ENCODE measurements at regions of chr2 and their contacts with region 1.

Region 1: GRCh38 chr2:25951071-25951547 is 31.2 kb downstream of the KIF3C start:
- DNase-seq: peak; percentile 80 to 83
- H3K4me3 ChIP-seq: no peak overlapping the region
- H3K4me3 Mint-ChIP-seq: no peak overlapping the region
- H3K27ac Mint-ChIP-seq: no peak overlapping the region
- H3K4me1 ChIP-seq: no peaks in the 10 kb centered on the region
- H3K4me1 Mint-ChIP-seq: no peaks in the 10 kb centered on the region
- H3K27me3 ChIP-seq: no peaks in the 10 kb centered on the region
- H3K27me3 Mint-ChIP-seq: no peaks in the 10 kb centered on the region
- CTCF ChIP-seq: peak; percentile 91 to 96

Region 2: GRCh38 chr2:24313744-24314632 is 1637.1 kb before region 1 on chr2:
- CTCF ChIA-PET with region 1: no interaction called
- POLR2A ChIA-PET with region 1: no interaction called
- intact Hi-C with region 1: no loop called
- DNase-seq: no peak
- H3K4me3 ChIP-seq: no peak overlapping the region
- H3K4me3 Mint-ChIP-seq: no peak overlapping the region
- H3K27ac Mint-ChIP-seq: no peak overlapping the region
- H3K4me1 ChIP-seq: no peaks in the 10 kb centered on the region
- H3K4me1 Mint-ChIP-seq: no peaks in the 10 kb centered on the region
- H3K27me3 ChIP-seq: no peaks in the 10 kb centered on the region
- H3K27me3 Mint-ChIP-seq: no peaks in the 10 kb centered on the region
- CTCF ChIP-seq: no peak

Region 3: DNA sequence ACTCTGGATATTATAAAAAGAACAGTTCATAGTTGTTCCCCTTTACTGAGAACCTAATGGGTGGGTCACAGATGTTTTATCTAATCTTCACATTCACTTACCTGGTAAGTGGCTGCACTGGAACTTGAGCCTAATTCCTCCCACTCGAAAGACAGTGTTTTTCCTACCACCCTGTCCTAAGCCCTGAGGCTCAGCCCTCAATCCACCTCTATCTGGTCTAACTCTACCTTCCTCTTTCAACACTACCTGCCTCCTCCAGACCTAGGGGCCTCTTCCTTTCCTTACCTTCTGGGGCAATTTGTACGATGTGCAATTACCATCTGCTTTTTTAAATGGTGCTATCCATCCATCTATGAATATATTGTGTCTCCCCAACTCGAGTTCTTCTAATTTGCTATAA is 40.9 kb after region 1 on chr2:
- CTCF ChIA-PET with region 1: interaction called, 4 read pairs
- POLR2A ChIA-PET with region 1: no interaction called
- intact Hi-C with region 1: loop called (anchors 1 kb)
- DNase-seq: no peak
- H3K4me3 ChIP-seq: no peak overlapping the region
- H3K4me3 Mint-ChIP-seq: no peak overlapping the region
- H3K27ac Mint-ChIP-seq: peak overlapping the region; percentile 5
- H3K4me1 ChIP-seq: peaks cover 12% of the 10 kb centered on the region
- H3K4me1 Mint-ChIP-seq: peaks cover 23% of the 10 kb centered on the region
- H3K27me3 ChIP-seq: no peaks in the 10 kb centered on the region
- H3K27me3 Mint-ChIP-seq: no peaks in the 10 kb centered on the region
- CTCF ChIP-seq: no peak

Region 4: DNA sequence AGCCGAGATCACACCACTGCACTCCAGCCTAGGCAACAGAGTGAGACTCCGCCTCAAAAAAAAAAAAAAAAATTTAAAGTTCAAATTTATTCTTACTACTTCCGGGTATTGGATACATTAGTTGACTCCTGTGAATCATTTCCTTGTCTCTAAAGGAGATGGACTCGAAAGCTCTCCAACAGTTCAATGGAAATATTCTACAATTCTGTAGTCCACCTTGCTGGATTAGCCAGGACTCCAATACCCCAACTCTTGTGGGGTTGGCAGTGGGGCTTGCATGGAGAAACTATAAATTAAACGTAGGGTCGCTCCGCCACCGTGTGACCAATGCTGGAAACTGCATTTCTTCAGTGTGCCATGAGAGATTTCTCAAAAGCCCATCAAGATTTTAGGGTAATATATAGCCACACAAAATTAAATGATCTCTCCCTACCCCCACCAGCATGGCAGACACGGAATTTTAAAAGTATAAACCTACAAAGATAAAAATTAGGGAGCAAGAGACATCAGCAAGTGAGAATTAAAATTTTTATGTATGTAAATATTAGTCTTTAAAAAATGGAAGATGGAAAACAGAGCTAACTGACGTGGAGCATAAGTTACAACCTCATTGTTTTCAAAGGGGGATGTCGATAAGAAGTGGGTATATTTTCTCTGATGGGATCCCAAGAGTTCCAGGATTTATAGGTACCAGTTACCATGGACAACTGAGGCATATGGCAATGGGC is 194.0 kb after region 1 on chr2:
- CTCF ChIA-PET with region 1: interaction called, 5 read pairs
- POLR2A ChIA-PET with region 1: interaction called, 7 read pairs
- intact Hi-C with region 1: loop called (anchors 1 kb)
- DNase-seq: peak; percentile 70 to 77
- H3K4me3 ChIP-seq: no peak overlapping the region
- H3K4me3 Mint-ChIP-seq: no peak overlapping the region
- H3K27ac Mint-ChIP-seq: no peak overlapping the region
- H3K4me1 ChIP-seq: 0 out of 2 replicates have a peak, but pooled peaks cover 11% of the 10 kb centered on the region
- H3K4me1 Mint-ChIP-seq: peaks cover 18% of the 10 kb centered on the region
- H3K27me3 ChIP-seq: no peaks in the 10 kb centered on the region
- H3K27me3 Mint-ChIP-seq: peaks cover 3% of the 10 kb centered on the region
- CTCF ChIP-seq: peak; percentile 73 to 87

Region 5: DNA sequence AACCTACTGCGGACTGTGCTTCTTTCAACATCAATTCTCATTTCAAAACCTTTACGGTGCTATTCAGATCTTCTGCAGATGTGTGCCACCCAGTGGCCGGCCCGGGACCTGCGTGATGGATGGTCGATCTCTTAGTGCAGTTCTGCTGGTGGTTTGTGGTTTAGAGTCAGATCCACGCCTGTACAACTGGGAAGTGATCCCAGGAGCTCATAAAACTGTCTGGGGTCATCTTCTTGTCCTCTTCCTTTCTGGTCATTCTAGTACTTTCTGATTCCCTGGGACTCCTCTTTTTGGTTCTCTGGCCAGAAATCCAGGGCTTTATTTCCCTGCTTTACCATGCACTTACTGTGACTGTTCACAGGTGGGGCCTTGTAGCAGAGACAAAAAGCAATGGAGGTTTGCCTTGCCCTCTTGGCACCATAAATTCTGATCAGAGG is 379.0 kb after region 1 on chr2:
- CTCF ChIA-PET with region 1: no interaction called
- POLR2A ChIA-PET with region 1: no interaction called
- intact Hi-C with region 1: loop called (anchors 1 kb)
- DNase-seq: peak; percentile 85 to 91
- H3K4me3 ChIP-seq: no peak overlapping the region
- H3K4me3 Mint-ChIP-seq: no peak overlapping the region
- H3K27ac Mint-ChIP-seq: no peak overlapping the region
- H3K4me1 ChIP-seq: no peaks in the 10 kb centered on the region
- H3K4me1 Mint-ChIP-seq: peaks cover 13% of the 10 kb centered on the region
- H3K27me3 ChIP-seq: no peaks in the 10 kb centered on the region
- H3K27me3 Mint-ChIP-seq: no peaks in the 10 kb centered on the region
- CTCF ChIP-seq: peak; percentile 84 to 95

Measured in Caco-2 (cell line).